Breast epithelium (tissue), 4 donors: ENCODE measurements at regions of chr14 and their contacts with region 1.

Region 1: GRCh38 chr14:50766338-50766886 is 64.5 kb downstream of the NIN start:
- DNase-seq: no peak
- H3K4me3 ChIP-seq: no peak overlapping the region
- H3K27ac ChIP-seq: peak overlapping the region in 1 of 2 donors; percentile 8
- H3K4me1 ChIP-seq: peaks cover 0 to 7% of the 10 kb centered on the region in 2 donors
- H3K27me3 ChIP-seq: no peaks in the 10 kb centered on the region
- CTCF ChIP-seq: no peak
- POLR2A ChIP-seq: no peak

Region 2: DNA sequence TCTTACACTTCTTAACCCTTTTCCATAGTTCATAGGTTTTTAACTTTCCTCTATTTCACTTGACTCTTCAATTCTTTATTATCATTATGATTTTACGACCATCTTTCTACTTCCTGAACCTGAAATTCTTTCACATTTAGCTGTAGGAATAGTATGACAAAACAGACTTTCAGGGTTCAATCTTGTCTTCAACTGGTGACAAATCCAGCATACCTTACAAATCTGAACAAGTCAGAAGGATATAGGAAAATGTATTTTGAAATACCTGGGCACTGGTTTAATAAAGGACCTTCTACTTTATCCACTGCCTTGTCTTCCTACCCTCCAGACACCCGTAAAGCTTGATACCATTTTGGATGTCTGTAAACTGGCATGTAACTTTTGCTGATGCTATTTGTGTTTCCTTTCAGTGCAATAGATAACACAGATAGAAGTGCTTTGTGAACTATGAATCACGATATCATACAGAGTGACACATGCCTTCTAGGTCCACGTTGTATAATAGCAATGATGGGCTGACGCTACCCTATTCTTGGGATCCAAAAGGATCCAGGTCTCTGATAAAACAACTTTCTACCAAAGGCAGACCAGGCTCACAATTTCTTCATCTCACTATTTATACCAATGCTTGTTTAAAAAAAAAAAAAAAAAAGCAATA is 20.9 kb before region 1 on chr14:
- intact Hi-C with region 1: loop called (anchors 2 kb)
- DNase-seq: no peak
- H3K4me3 ChIP-seq: no peak overlapping the region
- H3K27ac ChIP-seq: no peak overlapping the region
- H3K4me1 ChIP-seq: no peaks in the 10 kb centered on the region
- H3K27me3 ChIP-seq: no peaks in the 10 kb centered on the region
- CTCF ChIP-seq: no peak
- POLR2A ChIP-seq: no peak